Activated T-helper 2 cell treated with anti-CD3 and anti-CD28 coated beads, Interferon-gamma antibody, Interleukin-2, Interleukin-4, amounts not matched to agents 10 μg/mL and 5 μg/mL and 100 μg/mL, durations not matched to agents 14 hours and 24 hours and 36 hours (primary cell): ENCODE measurements at regions of chr20 and their contacts with region 1.

Region 1: DNA sequence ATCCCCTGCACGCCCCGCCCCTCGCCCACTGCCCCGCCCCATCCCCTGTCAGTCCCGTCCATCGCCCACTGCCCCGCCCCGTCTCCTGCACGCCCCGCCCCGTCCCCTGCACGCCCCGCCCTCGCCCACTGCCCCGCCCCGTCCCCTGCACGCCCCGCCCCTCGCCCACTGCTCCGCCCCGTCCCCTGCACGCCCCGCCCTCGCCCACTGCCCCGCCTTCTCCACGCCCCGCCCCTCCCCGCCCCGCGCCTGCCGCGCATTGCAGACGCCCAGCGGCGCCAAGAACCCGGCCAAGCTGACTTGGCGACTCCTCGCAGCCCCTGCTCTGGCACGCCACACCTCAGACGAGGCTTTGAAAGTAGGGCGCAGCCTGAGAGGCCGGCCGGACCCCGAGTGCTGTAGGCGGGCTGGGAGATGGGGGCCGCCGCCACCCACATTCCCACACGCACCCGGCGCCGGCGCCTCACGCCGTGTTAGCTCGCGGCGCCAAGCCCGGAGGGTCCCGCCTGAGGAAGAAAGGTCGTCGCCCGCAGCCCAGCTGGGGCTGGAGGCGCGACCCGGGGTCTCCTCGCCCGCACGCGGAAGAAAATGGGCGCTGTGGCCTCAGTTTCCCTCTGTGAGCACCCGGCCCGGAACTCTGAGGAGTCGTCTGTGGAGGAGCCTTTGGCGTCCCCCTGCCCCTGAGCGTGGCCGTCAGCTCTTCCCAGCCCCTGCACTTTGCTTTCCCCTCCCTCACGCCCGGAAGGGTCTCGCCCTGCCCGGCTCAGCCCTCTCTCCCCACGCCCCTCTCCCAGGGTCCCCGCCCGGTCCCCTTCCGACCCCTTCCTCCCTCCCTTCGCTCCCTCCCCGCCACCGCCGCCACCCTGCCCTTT is at the start of gene RAD21L1:
- DNase-seq: peak; percentile 65
- H3K4me3 Mint-ChIP-seq: peak within 1 kb of the TSS; percentile 79
- H3K27ac Mint-ChIP-seq: no peak within 1 kb of the TSS
- H3K4me1 Mint-ChIP-seq: peaks cover 8% of the 10 kb centered on the region
- H3K27me3 Mint-ChIP-seq: peaks cover 31% of the 10 kb centered on the region
- total RNA-seq, gene RAD21L1: 0.32 TPM in 1 of 2 replicates, not detected in the other

Region 2: DNA sequence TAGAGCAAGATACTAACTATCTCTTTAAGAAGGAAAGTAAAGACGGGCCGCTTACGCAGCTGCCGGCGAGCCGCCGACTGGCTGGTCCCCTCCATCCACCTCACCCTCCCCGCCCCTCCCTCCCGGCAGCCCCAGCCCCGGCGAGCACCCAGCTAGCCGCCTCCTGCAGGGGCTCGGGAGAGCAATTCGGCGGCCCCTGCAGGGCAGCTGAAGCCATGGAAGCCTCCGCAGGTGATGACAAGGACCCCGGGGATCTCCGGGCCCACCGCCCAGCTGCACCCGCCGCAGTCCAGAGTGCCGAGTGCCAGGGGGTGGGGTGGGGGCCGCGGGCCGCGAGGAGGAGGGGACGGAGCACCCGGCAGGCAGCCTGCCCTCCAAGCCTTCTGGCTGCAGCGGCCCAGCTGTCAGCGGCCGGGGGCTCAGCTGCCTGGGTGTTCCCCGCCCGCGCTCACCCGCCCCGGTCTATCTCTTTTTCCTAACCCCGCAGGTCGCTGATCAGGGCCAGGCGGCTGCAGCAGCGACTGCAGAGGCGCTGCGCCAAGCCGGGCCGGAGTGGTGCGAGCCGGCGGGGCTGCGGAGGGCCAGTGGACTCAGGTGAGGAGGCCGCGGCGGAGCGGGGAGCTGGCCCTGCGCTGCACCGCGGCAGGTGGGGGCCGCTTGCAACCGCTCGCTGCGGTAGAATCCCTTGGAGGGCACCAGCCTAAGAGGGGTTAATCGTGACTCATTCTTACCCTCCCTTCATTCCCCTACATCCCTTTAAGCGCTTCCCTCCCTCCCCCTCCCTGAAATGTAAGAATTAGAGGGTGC is 40.4 kb after region 1 on chr20 and contains the start of gene SNPH:
- intact Hi-C with region 1: loop called (anchors 5 kb)
- DNase-seq: peak; percentile 62
- H3K4me3 Mint-ChIP-seq: peak within 1 kb of the TSS; percentile 84
- H3K27ac Mint-ChIP-seq: peak within 1 kb of the TSS; percentile 76
- H3K4me1 Mint-ChIP-seq: peaks cover 25% of the 10 kb centered on the region
- H3K27me3 Mint-ChIP-seq: peaks cover 3% of the 10 kb centered on the region
- total RNA-seq, gene SNPH: 2.7 and 3.1 TPM in 2 replicates

Region 3: DNA sequence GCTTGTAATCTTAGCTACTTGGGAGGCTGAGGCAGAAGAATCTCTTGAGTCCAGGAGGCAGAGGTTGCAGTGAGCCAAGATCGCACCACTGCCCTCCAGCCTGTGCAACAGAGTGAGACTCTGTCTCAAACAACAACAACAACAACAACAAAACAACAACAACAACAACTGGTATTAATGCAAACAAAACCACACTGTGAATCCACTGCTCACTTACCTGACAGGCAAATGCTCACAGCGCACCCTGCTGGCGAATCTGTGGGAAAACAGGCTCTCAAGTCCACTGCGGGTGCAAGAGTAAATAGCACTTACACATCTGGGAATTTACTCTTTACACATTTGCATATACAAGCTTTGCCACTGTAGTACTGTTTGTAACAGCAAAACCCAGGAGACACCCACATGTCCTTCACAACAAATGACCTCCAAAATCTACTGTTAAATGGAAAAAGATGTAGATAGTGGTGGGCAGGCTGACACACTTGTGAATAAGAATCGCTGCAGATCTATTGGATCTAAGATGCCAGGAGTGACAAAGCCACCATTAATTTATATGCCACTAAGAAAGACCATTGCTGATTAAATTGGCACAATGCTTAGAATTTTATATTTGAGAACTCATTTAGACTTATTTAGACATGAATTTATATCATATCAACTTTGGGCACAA is 211.4 kb after region 1 on chr20:
- intact Hi-C with region 1: loop called (anchors 5 kb)
- DNase-seq: peak; percentile 69
- H3K4me3 Mint-ChIP-seq: no peak overlapping the region
- H3K27ac Mint-ChIP-seq: no peak overlapping the region
- H3K4me1 Mint-ChIP-seq: peaks cover 41% of the 10 kb centered on the region
- H3K27me3 Mint-ChIP-seq: peaks cover 4% of the 10 kb centered on the region